Calu3 (cell line): ENCODE measurements at regions of chr11 and their contacts with region 1.

Region 1: DNA sequence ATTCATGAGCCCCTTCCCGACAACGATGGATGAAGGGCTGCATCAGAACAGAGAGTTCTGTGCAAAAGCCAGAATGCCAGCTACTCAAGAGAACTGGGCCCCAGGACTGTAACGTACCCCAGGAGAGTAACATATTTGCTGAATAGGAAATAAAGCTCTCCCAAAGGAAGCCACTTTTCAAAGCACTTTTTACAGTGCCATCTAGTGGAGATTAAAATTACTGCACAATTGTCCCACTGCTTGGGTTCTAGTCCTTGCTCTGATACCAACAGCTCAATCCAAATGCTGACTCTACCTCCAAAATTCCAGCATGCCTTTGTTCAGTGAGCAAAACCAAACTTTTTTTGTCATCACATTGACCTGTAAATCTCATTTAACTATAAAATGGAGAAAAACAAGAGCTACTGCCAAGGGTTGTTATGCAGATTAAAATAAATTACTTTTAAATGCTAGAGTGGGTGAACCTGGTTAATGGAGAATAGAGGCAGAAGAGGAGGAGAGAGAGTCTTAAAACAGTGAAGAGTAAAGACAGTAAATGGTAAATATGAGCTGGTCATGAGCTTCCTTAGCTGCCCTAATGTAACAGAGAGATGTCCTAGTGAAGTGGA is 87.6 kb upstream of the FSHB start:
- DNase-seq: peak; percentile 11
- H3K4me3 Mint-ChIP-seq: no peak overlapping the region
- H3K27ac Mint-ChIP-seq: no peak overlapping the region
- H3K4me1 Mint-ChIP-seq: no peaks in the 10 kb centered on the region
- H3K27me3 Mint-ChIP-seq: no peaks in the 10 kb centered on the region
- CTCF ChIP-seq: peak; percentile 44

Region 2: DNA sequence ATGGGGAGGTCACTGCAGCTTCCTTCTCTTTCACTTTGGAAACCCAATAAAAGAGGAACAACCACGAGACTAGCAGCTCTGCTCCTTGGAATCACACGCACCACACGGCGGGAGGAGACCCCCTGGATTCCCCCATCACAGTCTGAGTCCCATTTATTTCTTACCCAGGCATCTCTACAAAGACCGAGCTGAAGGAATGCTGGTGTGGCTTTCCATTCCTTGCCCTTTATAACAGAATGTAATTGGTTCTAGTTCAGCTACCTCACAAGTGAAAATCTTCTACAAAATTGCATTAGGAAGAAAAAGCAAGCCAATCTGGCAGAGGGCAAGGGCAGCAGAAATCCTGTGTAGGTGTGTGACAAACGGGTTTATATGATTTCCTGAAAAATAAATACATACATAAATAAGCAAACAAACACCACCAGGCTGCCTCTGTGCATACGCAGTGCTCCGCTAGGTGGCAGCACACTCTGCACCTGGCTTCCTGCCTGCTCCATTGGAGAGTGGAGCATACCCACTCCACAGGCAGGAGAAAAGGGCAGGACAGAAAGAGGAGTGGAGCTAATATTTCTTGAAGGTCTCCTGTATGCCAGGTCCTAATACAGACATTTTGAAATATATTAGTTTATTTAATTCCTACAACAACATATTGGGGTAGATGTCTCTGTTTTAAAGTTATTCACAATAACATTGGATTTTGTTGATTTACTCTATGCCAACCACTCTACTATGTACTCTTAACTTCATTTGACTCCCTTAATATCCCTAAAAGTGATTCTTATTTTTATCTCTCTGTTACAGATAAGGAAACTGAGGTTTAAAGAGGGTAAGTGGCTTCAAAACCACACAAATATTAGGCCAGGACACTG is 799.5 kb before region 1 on chr11:
- CTCF ChIA-PET with region 1: no interaction called
- intact Hi-C with region 1: loop called (anchors 1 kb)
- DNase-seq: peak; percentile 78
- H3K4me3 Mint-ChIP-seq: peak overlapping the region; percentile 49
- H3K27ac Mint-ChIP-seq: no peak overlapping the region
- H3K4me1 Mint-ChIP-seq: no peaks in the 10 kb centered on the region
- H3K27me3 Mint-ChIP-seq: no peaks in the 10 kb centered on the region
- CTCF ChIP-seq: peak; percentile 73